ENCODE measurements at regions of chr4 and their contacts with region 1.

Region 1: DNA sequence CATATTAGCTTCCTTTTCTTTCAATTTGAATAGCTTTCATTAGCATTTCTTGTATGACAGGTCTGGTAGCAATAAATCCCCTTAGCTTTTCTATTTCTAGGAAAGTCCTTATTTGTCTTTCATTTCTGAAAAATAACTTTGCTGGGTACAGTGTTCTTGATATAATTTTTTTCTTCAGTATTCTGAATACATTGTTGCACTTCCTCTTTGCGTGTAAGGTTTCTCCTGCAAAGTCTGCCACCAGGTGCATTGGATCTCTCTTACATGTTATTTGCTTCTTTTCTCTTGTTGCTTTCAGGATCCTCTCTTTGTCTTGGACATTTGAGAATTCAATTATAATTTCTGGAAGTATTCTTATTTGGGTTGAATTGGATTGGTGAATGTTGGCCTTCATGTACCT is 663.7 kb downstream of the GRXCR1 start:
- DNase-seq: no peak
- H3K4me3 ChIP-seq: no peak overlapping the region
- H3K27ac ChIP-seq: no peak overlapping the region
- H3K4me1 ChIP-seq: no peaks in the 10 kb centered on the region
- H3K27me3 ChIP-seq: no peaks in the 10 kb centered on the region
- CTCF ChIP-seq: no peak

Region 2: GRCh38 chr4:43496188-43496587 is 60.1 kb before region 1 on chr4:
- CTCF ChIA-PET with region 1: no interaction called
- dilution Hi-C with region 1: loop called (anchors 5 kb)
- in situ Hi-C with region 1: no loop called
- intact Hi-C with region 1: no loop called
- DNase-seq: no peak
- H3K4me3 ChIP-seq: no peak overlapping the region
- H3K27ac ChIP-seq: no peak overlapping the region
- H3K4me1 ChIP-seq: no peaks in the 10 kb centered on the region
- H3K27me3 ChIP-seq: no peaks in the 10 kb centered on the region
- CTCF ChIP-seq: no peak

Region 3: DNA sequence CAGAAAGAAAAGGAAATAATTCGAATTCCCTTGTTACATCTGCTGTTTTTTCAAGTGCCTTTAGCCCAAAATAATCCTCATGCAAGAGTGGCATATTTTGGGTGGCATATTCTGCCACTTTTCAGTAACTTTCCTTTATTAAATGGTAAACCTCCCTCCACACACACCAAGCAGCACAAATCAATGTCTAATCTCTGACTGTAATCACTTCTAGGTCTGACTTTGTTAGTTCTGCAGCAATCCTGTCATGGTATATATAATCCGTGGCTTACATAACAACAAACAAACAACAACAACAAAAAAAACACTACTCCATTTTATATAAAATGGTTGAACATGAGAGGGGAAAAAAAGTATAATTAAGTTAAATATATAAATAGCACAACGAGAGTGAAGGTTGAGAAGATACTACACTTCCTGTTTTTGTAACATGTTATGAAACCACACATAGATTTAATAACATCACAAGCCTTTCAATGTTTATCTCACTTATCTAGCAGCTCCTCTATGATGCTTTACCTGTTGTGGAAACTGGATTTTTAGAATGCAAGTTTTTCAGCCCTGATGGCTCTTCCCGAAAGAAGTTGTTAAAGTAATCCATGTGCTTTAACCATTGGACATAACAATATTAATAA is 51.7 kb after region 1 on chr4:
- CTCF ChIA-PET with region 1: no interaction called
- dilution Hi-C with region 1: loop called (anchors 5 kb)
- in situ Hi-C with region 1: no loop called
- intact Hi-C with region 1: no loop called
- DNase-seq: no peak
- H3K4me3 ChIP-seq: no peak overlapping the region
- H3K27ac ChIP-seq: no peak overlapping the region
- H3K4me1 ChIP-seq: no peaks in the 10 kb centered on the region
- H3K27me3 ChIP-seq: no peaks in the 10 kb centered on the region
- CTCF ChIP-seq: no peak

Measured in mammary epithelial cell (primary cell).